BJ (cell line): ENCODE measurements at regions of chr22 and their contacts with region 1.

Region 1: DNA sequence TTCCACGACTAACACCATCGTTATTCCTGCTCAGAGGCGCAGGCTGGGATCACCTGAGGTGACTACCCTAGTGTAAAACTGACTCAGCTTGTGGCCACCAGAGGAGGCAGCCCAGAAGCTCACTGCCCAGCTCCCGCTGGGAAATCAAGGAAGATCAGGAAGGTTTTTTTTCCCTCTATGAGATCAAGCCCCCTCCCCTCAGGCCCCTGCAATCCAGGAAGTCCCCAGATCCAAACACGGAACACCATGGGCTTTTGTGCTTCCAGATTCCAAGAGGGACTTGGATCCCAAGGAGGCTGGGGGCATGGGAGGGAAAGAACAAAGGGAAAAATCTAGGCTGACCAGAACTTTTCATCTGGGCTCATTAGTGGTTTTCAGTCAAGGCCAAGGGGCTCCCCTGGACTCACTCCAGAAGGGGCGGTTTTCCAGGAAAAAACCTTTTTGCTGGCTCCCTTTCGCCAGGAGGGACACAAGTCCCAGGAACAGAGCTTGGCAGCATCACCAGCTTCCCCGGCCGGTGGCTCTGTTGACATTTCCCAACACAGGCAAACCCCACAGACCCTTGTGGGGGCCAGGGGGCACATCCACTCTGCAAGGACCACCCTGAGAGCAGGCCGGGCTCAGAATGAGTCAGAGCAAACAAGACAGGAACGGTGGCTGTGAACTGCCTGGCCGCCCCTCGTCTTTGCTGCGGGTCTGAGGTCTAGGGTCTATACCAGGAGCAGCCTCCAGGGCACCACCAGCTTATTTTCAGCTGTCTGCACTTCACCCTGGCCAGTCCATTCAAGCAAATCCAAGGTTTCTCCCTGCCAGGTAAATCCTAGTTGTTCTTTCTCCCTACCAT is 36.8 kb downstream of the MYH9 start:
- DNase-seq: no peak
- H3K4me3 ChIP-seq: no peak overlapping the region
- H3K27me3 ChIP-seq: no peaks in the 10 kb centered on the region
- CTCF ChIP-seq: no peak

Region 2: GRCh38 chr22:36373258-36373579 is 22.2 kb after region 1 on chr22:
- CTCF ChIA-PET with region 1: no interaction called
- POLR2A ChIA-PET with region 1: no interaction called
- DNase-seq: no peak
- H3K4me3 ChIP-seq: no peak overlapping the region
- H3K27me3 ChIP-seq: no peaks in the 10 kb centered on the region
- CTCF ChIP-seq: no peak

Region 3: GRCh38 chr22:36387752-36388518 is 37.0 kb after region 1 on chr22 and contains the start of gene MYH9:
- CTCF ChIA-PET with region 1: no interaction called
- POLR2A ChIA-PET with region 1: interaction called, 10 read pairs
- DNase-seq: peak; percentile 97
- H3K4me3 ChIP-seq: peak within 1 kb of the TSS; percentile 89
- H3K27me3 ChIP-seq: no peaks in the 10 kb centered on the region
- CTCF ChIP-seq: no peak
- polyA plus RNA-seq, gene MYH9: 262 and 340 TPM in 2 replicates